Heart left ventricle (tissue), 16 donors: ENCODE measurements at regions of chr17 and their contacts with region 1.

Region 1: GRCh38 chr17:77842528-77843147 is 115.9 kb upstream of the TNRC6C start:
- DNase-seq: peak in 1 of 5 donors; percentile 7
- ATAC-seq: no peak
- H3K4me3 ChIP-seq: no peak overlapping the region
- H3K27ac ChIP-seq: peak overlapping the region in 10 of 12 donors; percentile 25 to 89 (median 60)
- H3K4me1 ChIP-seq: peaks cover 0 to 47% (median 36%) of the 10 kb centered on the region in 12 donors
- H3K27me3 ChIP-seq: no peaks in the 10 kb centered on the region
- CTCF ChIP-seq: no peak
- POLR2A ChIP-seq: no peak

Region 2: GRCh38 chr17:77645072-77646045 is 197.3 kb before region 1 on chr17:
- intact Hi-C with region 1: no loop called
- DNase-seq: no peak
- ATAC-seq: no peak
- H3K4me3 ChIP-seq: peak overlapping the region in 4 of 12 donors; percentile 5 to 26 (median 22)
- H3K27ac ChIP-seq: no peak overlapping the region
- H3K4me1 ChIP-seq: peaks cover 0 to 9% (median 0%) of the 10 kb centered on the region in 12 donors
- H3K27me3 ChIP-seq: peaks cover 0 to 4% (median 0%) of the 10 kb centered on the region in 9 donors
- CTCF ChIP-seq: peak in 2 of 12 donors; percentile 13 to 16
- POLR2A ChIP-seq: no peak

Region 3: GRCh38 chr17:77796176-77796860 is 46.3 kb before region 1 on chr17:
- intact Hi-C with region 1: loop called in 1 of 10 experiments (anchors 10 kb)
- DNase-seq: peak in 1 of 5 donors; percentile 18
- ATAC-seq: no peak
- H3K4me3 ChIP-seq: no peak overlapping the region
- H3K27ac ChIP-seq: peak overlapping the region in 1 of 12 donors; percentile 47
- H3K4me1 ChIP-seq: no peaks in the 10 kb centered on the region
- H3K27me3 ChIP-seq: no peaks in the 10 kb centered on the region
- CTCF ChIP-seq: no peak
- POLR2A ChIP-seq: no peak

Region 4: DNA sequence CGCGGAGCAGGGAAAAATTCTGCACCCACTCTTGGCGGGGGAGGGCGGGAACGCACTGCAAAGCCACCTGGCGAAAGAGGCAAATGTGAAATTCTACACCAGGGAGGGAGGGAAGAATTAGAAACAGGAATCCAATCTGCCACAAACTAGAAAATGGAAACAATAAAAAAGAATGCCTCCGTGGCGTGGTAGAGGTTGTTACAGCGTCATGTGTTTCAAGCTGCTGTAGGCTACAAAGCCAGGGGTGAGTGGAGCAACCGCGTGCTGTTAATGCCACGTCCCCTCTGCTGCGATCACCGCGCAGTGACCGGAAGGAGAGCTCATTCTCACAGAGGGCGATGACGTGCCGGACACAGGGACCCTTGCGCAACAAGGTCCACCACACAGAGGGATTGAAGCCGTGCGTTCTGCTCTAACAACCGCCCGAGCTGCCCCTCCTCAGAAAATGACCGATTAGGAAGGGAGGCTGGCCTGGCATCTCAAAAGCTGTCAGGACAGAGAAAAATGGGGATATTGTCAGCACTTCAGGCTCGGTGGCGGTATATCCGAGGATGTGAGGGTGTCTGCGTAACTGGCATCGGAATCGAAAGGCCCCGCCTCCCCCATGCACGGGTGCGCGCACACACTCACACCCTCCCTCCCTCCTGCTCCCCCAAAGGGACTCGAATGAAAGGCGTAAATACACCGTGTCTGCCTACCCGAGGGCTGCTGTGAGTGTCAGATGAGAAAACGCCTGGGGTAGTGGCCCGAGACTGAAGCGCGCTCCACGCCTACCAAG is 45.0 kb after region 1 on chr17:
- intact Hi-C with region 1: no loop called
- DNase-seq: peak; percentile 80 to 91 (median 91)
- ATAC-seq: peak; percentile 71 to 92 (median 90)
- H3K4me3 ChIP-seq: peak overlapping the region; percentile 3 to 65 (median 56)
- H3K27ac ChIP-seq: peak overlapping the region; percentile 18 to 79 (median 65)
- H3K4me1 ChIP-seq: peaks cover 0 to 36% (median 20%) of the 10 kb centered on the region in 12 donors
- H3K27me3 ChIP-seq: no peaks in the 10 kb centered on the region
- CTCF ChIP-seq: no peak
- POLR2A ChIP-seq: peak in 1 of 2 donors; percentile 40

Region 5: DNA sequence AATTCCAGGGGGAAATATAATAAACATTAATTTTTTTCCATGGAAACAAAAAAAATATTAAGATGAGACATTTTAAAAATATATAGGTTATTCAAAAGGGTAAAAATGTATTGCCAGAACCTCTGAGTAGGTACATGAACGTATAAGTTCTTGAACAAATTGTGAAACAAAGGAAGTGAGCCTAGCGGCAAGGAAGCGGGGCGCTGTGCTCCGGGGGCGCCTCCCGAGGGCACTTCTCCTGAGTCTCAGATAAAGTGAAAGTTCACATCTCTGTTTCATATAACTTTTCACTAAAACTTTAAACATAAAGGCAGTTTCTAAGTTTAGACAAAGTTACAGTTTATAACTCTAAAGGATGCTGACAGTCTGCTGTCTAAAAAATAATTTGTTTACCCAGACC is 168.1 kb after region 1 on chr17:
- intact Hi-C with region 1: no loop called
- DNase-seq: no peak
- ATAC-seq: no peak
- H3K4me3 ChIP-seq: no peak overlapping the region
- H3K27ac ChIP-seq: no peak overlapping the region
- H3K4me1 ChIP-seq: peaks cover 0 to 16% (median 6%) of the 10 kb centered on the region in 12 donors
- H3K27me3 ChIP-seq: no peaks in the 10 kb centered on the region
- CTCF ChIP-seq: no peak
- POLR2A ChIP-seq: no peak

Region 6: GRCh38 chr17:78104540-78104941 is 261.9 kb after region 1 on chr17:
- intact Hi-C with region 1: no loop called
- DNase-seq: peak in 1 of 5 donors; percentile 25
- ATAC-seq: peak in 1 of 4 donors; percentile 27
- H3K4me3 ChIP-seq: no peak overlapping the region
- H3K27ac ChIP-seq: no peak overlapping the region
- H3K4me1 ChIP-seq: peaks cover 0 to 12% (median 0%) of the 10 kb centered on the region in 12 donors
- H3K27me3 ChIP-seq: no peaks in the 10 kb centered on the region
- CTCF ChIP-seq: no peak
- POLR2A ChIP-seq: no peak